H1 (cell line): ENCODE measurements at regions of chr1 and their contacts with region 1.

Region 1: GRCh38 chr1:206663832-206664652 is 20.7 kb upstream of the MAPKAPK2 start:
- DNase-seq: peak in 1 of 2 experiments; percentile 92
- H3K4me3 ChIP-seq: peak overlapping the region; percentile 11 to 54 (median 25); a peak in 7 of 8 replicates
- H3K27ac ChIP-seq: no peak overlapping the region
- H3K4me1 ChIP-seq: peaks cover 0 to 5% (median 1%) of the 10 kb centered on the region in 4 experiments; a peak in 4 of 7 replicates
- H3K27me3 ChIP-seq: peaks cover 0 to 10% (median 3%) of the 10 kb centered on the region in 4 experiments; a peak in 5 of 7 replicates
- CTCF ChIP-seq: peak; percentile 72 to 91 (median 87)
- EP300 ChIP-seq: no peak
- POLR2A ChIP-seq: no peak
- RAD21 ChIP-seq: peak; percentile 88 to 94

Region 2: DNA sequence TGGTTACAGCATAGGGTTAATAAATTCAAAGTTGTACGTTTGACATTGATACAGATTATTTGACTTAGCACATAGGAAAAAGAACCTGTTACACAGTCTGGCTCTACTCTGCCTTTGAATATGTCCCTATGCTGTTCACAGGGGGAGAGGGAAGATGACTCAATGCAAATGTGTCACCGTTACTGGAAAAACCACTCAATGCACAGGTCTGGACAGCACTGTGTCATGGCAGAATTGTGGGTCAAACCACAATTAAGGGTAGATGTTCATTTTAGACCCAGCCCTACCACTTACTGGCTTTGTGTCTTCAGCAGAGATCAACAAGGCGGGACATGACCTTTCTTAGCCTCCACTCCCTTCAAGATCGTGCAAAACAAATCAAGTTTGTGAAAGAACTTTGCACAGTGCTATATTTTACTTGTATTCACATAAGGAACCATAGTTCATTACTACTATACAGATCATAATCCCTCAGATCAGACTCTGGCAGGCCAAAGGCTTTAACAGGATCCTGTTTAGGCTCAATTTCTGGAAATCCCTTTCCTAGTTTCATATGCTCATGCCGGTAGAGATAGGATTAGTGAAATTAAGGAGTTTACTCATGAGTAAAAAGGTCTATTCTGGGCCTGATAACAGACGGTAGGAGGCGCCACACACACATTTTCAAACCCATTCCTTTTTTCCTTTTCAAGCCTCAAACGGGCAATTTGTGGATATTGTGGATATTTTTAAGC is 73.8 kb before region 1 on chr1:
- CTCF ChIA-PET with region 1: interaction called, 24 read pairs
- POLR2A ChIA-PET with region 1: no interaction called
- DNase-seq: no peak
- H3K4me3 ChIP-seq: no peak overlapping the region
- H3K27ac ChIP-seq: no peak overlapping the region
- H3K4me1 ChIP-seq: no peaks in the 10 kb centered on the region
- H3K27me3 ChIP-seq: no peaks in the 10 kb centered on the region
- CTCF ChIP-seq: peak in 2 of 3 experiments; percentile 49 to 69; a peak in 3 of 4 replicates
- EP300 ChIP-seq: no peak
- POLR2A ChIP-seq: no peak
- RAD21 ChIP-seq: peak; percentile 40 to 54; a peak in 3 of 4 replicates

Region 3: DNA sequence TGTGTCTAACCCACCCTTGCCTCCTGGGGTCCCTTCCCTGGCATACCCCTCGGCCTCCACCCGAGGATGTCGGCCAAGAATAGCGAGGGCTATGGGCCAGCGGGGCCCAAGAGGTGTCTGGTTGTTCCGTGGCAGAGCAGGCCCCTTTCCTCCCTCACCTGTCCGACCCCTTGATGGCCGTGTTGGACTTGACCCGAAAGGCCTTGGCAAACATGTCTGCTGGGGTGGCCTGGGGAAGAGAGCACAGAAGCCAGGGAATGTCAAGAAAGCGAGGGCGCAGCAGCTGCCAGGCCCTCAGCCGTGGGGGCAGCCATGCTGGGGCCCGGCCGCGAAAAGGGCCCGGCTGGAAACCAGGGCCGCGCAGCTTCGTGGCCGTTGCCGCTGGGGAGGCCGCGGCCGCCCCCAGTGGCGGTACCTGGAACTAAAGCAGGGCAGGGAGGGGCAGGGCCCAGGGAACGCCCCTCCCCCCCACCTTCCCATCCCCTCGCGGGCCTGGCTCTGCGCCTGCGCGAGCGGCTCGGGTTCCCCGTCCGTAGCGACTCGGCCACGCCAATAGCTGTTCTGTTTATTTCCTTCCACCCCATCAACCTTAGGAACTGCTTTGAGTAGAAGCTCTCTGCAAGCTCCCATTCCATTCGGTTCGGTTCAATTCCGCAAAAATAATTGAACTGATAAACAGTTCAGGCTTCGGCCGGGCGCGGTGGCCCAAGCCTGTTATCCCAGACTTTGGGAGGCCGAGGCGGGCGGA is 51.7 kb before region 1 on chr1 and contains the start of gene EIF2D:
- CTCF ChIA-PET with region 1: interaction called, 140 read pairs
- POLR2A ChIA-PET with region 1: interaction called, 5 read pairs
- DNase-seq: peak; percentile 86 to 98
- H3K4me3 ChIP-seq: peak within 1 kb of the TSS; percentile 83 to 91 (median 84)
- H3K27ac ChIP-seq: peak within 1 kb of the TSS; percentile 89
- H3K4me1 ChIP-seq: peaks cover 0 to 6% (median 4%) of the 10 kb centered on the region in 4 experiments; a peak in 5 of 7 replicates
- H3K27me3 ChIP-seq: no peaks in the 10 kb centered on the region; a peak in 1 of 7 replicates
- CTCF ChIP-seq: peak; percentile 90 to 99 (median 92)
- EP300 ChIP-seq: peak in 1 of 2 experiments; percentile 88; a peak in 1 of 3 replicates
- POLR2A ChIP-seq: peak; percentile 92 to 97
- RAD21 ChIP-seq: peak; percentile 35 to 39; a peak in 2 of 4 replicates
- total RNA-seq, gene EIF2D: 33.1 and 36.1 TPM in 2 replicates

Region 4: GRCh38 chr1:206685769-206686485 is 21.9 kb after region 1 on chr1:
- CTCF ChIA-PET with region 1: interaction called, 48 read pairs
- POLR2A ChIA-PET with region 1: interaction called, 4 read pairs
- DNase-seq: no peak
- H3K4me3 ChIP-seq: peak overlapping the region; percentile 80 to 88 (median 82)
- H3K27ac ChIP-seq: peak overlapping the region; percentile 52; the same call in 1 of the 2 replicates
- H3K4me1 ChIP-seq: peaks cover 10 to 27% (median 15%) of the 10 kb centered on the region in 4 experiments
- H3K27me3 ChIP-seq: peaks cover 9 to 31% (median 26%) of the 10 kb centered on the region in 4 experiments
- CTCF ChIP-seq: no peak
- EP300 ChIP-seq: no peak
- POLR2A ChIP-seq: peak in 1 of 2 experiments; percentile 14; a peak in 1 of 3 replicates
- RAD21 ChIP-seq: no peak

Region 5: GRCh38 chr1:206700445-206701036 is 36.5 kb after region 1 on chr1:
- CTCF ChIA-PET with region 1: interaction called, 48 read pairs
- POLR2A ChIA-PET with region 1: interaction called, 5 read pairs
- DNase-seq: no peak
- H3K4me3 ChIP-seq: no peak overlapping the region
- H3K27ac ChIP-seq: no peak overlapping the region
- H3K4me1 ChIP-seq: peaks cover 11 to 31% (median 24%) of the 10 kb centered on the region in 4 experiments
- H3K27me3 ChIP-seq: no peaks in the 10 kb centered on the region; a peak in 1 of 7 replicates
- CTCF ChIP-seq: no peak
- EP300 ChIP-seq: no peak
- POLR2A ChIP-seq: no peak
- RAD21 ChIP-seq: no peak